Uterus (tissue), 4 donors: ENCODE measurements at regions of chr1 and their contacts with region 1.

Region 1: DNA sequence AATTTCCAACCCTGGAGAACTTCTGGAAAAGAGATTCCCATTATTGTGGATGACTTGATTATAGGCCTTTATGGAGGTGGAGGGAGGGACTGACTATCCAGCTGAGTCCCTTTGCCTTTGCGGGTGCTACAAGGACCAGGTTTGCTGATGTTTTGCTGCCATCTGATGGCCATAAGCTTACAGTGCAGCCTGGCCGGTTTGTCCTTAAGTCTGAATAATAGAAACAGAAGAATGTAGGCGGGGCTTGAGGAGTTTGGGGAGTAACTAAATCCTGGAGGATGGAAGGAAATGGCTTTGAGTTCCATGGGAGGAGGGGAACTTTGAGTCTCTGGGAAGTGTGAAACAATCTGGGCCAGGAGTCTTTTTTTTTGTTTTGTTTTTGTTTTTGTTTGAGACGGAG is 55.7 kb upstream of the CD1D start:
- DNase-seq: peak; percentile 91 to 94
- H3K4me3 ChIP-seq: no peak overlapping the region
- H3K27ac ChIP-seq: no peak overlapping the region
- H3K4me1 ChIP-seq: no peaks in the 10 kb centered on the region
- H3K27me3 ChIP-seq: no peaks in the 10 kb centered on the region
- CTCF ChIP-seq: peak; percentile 91 to 98 (median 94)
- POLR2A ChIP-seq: no peak

Region 2: GRCh38 chr1:157963713-157964112 is 161.3 kb before region 1 on chr1:
- intact Hi-C with region 1: loop called (anchors 5 kb)
- DNase-seq: peak; percentile 69 to 77
- H3K4me3 ChIP-seq: no peak overlapping the region
- H3K27ac ChIP-seq: no peak overlapping the region
- H3K4me1 ChIP-seq: peaks cover 0 to 5% of the 10 kb centered on the region in 2 donors
- H3K27me3 ChIP-seq: no peaks in the 10 kb centered on the region
- CTCF ChIP-seq: peak; percentile 84 to 97 (median 92)
- POLR2A ChIP-seq: no peak